ENCODE measurements at regions of chr1 and their contacts with region 1.

Region 1: DNA sequence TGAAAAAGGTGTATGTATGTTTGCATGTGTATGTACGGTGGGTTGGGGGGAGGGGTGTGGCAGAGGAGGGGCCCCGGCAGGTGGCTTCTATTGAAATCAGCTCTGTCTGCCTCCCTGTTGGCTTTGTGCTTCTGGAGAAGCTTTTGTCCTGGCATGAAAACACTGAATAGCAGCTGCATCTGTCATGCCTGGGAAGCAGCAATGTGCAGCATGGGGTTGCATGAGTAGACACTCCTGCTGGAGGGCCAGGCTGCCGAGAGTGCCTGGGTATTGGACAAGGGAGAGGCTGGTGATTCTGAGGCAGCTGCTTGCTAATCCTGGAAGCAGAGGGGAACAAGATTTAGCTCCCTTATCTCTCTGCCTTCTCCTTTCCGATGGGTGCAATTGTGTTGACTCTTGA is 20.5 kb downstream of the MAPKAPK2 start:
- DNase-seq: peak in 1 of 5 donors; percentile 56
- ATAC-seq: peak; percentile 18 to 63 (median 28)
- H3K4me3 ChIP-seq: no peak overlapping the region
- H3K27ac ChIP-seq: peak overlapping the region in 11 of 12 donors; percentile 42 to 82 (median 70)
- H3K4me1 ChIP-seq: peaks cover 47 to 100% (median 94%) of the 10 kb centered on the region in 12 donors
- H3K27me3 ChIP-seq: no peaks in the 10 kb centered on the region
- CTCF ChIP-seq: no peak
- POLR2A ChIP-seq: no peak

Region 2: DNA sequence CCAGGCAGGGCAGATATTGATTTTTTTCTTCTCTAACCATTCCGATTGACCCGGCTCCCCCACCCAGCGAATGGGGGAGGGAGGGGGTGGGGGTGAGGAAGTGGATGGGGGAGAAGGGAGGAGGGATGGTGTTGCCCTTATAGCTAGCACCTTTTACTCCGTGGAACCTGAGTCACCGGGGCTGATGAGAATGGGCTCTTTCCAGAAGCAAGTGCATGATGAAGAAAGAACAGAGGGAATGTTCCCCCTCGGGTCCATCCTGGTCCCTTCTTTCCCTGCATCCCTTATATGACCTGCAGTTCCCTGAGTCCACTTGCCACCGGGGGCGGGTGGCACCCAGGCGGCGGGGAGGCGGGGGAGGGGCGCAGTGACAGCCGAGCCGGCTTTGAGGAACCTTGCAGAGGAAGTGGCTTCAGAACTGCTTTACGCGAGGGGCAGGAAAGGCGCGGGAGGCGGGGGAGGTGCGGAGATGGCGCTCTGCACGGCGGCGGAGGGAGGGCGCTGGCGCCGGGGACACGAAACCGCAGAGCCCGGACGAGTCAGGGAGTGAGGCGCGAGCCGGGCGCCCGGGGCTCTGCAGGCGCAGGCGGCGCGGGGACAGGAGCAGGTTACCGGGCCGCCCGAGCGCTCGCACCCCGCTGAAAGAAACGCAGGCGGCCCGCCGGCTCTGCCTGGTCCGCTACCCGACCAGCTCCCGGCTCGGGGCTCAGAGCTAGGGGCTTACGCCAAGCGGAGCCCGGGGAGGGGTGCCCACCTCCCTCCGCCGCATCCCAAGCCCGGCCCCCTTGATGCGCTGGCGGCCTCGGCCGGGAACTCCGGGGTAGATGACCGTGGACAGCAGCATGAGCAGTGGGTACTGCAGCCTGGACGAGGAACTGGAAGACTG is 148.2 kb before region 1 on chr1:
- intact Hi-C with region 1: no loop called
- DNase-seq: peak; percentile 82 to 94 (median 88)
- ATAC-seq: peak in 3 of 4 donors; percentile 76 to 77 (median 76)
- H3K4me3 ChIP-seq: peak overlapping the region; percentile 48 to 81 (median 64)
- H3K27ac ChIP-seq: peak overlapping the region; percentile 5 to 98 (median 69)
- H3K4me1 ChIP-seq: peaks cover 5 to 70% (median 48%) of the 10 kb centered on the region in 12 donors
- H3K27me3 ChIP-seq: no peaks in the 10 kb centered on the region
- CTCF ChIP-seq: peak in 3 of 12 donors; percentile 7 to 19 (median 7)
- POLR2A ChIP-seq: no peak

Region 3: DNA sequence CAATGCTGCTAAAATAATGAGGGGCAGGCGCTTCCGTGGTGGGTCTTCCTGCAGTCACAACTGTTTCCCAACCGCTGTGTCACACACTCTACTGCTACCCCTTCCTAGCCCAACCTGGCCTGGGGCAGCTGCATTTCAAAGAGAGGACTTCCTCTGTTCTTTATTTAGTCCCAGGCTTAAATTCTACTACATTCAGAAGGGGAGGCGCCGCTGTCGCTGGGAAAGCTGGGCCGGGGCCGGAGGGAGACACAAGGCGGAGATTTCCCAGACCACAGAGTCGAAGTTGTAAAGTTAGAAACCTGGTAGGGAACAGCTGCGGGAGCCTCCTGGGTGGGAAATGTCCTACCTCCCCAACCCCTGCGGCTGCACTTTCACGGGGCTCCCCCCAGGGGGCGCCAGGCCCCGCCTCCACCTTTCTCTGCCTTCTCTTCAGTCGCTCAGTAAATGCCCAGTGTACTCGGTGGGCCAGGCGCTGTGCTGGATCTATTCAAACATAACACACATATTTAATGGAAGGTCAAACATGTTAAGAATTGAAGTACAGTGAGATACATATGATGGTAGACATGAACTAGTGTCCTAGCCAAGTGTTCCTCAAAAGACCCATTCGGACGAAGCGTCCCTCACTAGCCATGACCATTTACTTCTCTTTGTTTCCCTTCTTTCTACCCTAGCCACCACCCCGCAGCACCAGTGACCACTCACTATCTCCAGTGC is 46.8 kb before region 1 on chr1:
- intact Hi-C with region 1: loop called in 1 of 10 experiments (anchors 5 kb)
- DNase-seq: peak; percentile 60 to 82 (median 64)
- ATAC-seq: peak; percentile 48 to 59 (median 56)
- H3K4me3 ChIP-seq: peak overlapping the region in 9 of 12 donors; percentile 1 to 46 (median 31)
- H3K27ac ChIP-seq: peak overlapping the region; percentile 78 to 96 (median 88)
- H3K4me1 ChIP-seq: peaks cover 5 to 92% (median 59%) of the 10 kb centered on the region in 12 donors
- H3K27me3 ChIP-seq: no peaks in the 10 kb centered on the region
- CTCF ChIP-seq: peak; percentile 69 to 90 (median 87)
- POLR2A ChIP-seq: peak in 1 of 2 donors; percentile 17

Measured in heart left ventricle (tissue), 16 donors.